GM12878 (cell line): ENCODE measurements at regions of chr1 and their contacts with region 1.

Region 1: GRCh38 chr1:233025157-233025915 is 74.9 kb downstream of the NTPCR start:
- DNase-seq: no peak
- ATAC-seq: peak; percentile 69
- H3K4me3 ChIP-seq: no peak overlapping the region
- H3K27ac ChIP-seq: no peak overlapping the region
- H3K4me1 ChIP-seq: no peaks in the 10 kb centered on the region
- H3K27me3 ChIP-seq: no peaks in the 10 kb centered on the region
- CTCF ChIP-seq: peak; percentile 30 to 54 (median 49); a peak in 4 of 6 replicates
- EP300 ChIP-seq: no peak
- POLR2A ChIP-seq: no peak
- RAD21 ChIP-seq: peak; percentile 70

Region 2: DNA sequence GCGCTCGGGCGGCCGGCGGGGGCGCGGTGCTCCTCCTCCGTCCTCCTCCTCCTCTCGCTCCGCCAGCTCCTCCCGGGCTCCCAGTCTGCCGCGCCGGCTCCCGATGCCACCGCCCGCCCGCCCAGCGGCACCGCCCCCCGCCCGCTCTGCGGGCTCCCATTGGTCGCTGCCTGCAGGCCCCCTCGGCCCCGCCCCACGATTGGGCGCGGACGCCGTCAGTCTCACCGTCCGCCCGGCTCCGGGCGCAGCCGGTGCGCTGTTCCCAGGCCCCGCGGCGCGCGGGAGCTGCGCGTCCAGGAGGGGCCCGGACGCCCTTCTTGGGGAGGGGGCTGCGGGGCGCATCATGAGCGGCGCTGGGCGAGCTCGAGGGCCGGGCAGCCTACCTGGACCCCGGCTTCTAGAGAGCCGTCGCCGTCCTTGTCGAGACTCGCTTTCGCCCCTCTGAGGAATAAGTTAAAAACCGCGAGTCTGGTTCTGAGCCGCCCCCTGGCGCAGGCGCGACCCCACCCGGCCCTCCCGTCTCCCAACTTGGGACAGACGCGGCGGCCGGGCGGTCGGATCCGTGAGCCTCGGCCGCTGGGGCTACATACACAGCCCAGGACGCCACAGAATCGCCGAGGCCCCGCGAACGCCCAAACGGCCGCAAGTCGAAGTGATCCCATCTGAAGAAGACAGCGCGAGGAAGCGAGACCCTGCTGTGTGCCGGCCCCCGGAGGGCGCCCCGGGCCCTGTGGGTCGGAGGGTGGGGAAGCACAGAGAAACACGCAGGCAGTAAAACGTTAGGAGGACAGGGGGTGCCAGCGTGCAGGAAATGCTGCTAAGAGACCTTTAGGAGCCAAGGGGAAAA is 395.1 kb before region 1 on chr1 and contains the start of gene SIPA1L2:
- CTCF ChIA-PET with region 1: interaction called, 4 read pairs
- POLR2A ChIA-PET with region 1: no interaction called
- RAD21 ChIA-PET with region 1: no interaction called
- SMC1A ChIA-PET with region 1: no interaction called
- in situ Hi-C with region 1: loop called (anchors 10 kb)
- intact Hi-C with region 1: loop called (anchors 2 kb)
- DNase-seq: peak; percentile 8
- ATAC-seq: peak; percentile 100
- H3K4me3 ChIP-seq: peak within 1 kb of the TSS; percentile 83
- H3K27ac ChIP-seq: no peak within 1 kb of the TSS
- H3K4me1 ChIP-seq: no peaks in the 10 kb centered on the region
- H3K27me3 ChIP-seq: peaks cover 2 to 22% of the 10 kb centered on the region in 2 experiments; a peak in 3 of 4 replicates
- CTCF ChIP-seq: peak in 2 of 3 experiments; percentile 29 to 41; a peak in 4 of 6 replicates
- EP300 ChIP-seq: no peak
- POLR2A ChIP-seq: no peak
- RAD21 ChIP-seq: peak; percentile 25; the same call in 1 of the 2 replicates
- polyA plus RNA-seq, gene SIPA1L2: not detected

Region 3: GRCh38 chr1:232635778-232636356 is 389.5 kb before region 1 on chr1:
- CTCF ChIA-PET with region 1: interaction called, 4 read pairs
- POLR2A ChIA-PET with region 1: no interaction called
- RAD21 ChIA-PET with region 1: no interaction called
- SMC1A ChIA-PET with region 1: no interaction called
- in situ Hi-C with region 1: loop called (anchors 10 kb)
- intact Hi-C with region 1: loop called (anchors 2 kb)
- DNase-seq: no peak
- ATAC-seq: peak; percentile 91
- H3K4me3 ChIP-seq: no peak overlapping the region
- H3K27ac ChIP-seq: no peak overlapping the region
- H3K4me1 ChIP-seq: no peaks in the 10 kb centered on the region
- H3K27me3 ChIP-seq: 0 out of 4 replicates have a peak, but pooled peaks cover 0 to under 1% of the 10 kb centered on the region in 2 experiments
- CTCF ChIP-seq: peak; percentile 56 to 69 (median 67); a peak in 5 of 6 replicates
- EP300 ChIP-seq: no peak
- POLR2A ChIP-seq: no peak
- RAD21 ChIP-seq: peak; percentile 68